ENCODE measurements at regions of chr5 and their contacts with region 1.

Region 1: DNA sequence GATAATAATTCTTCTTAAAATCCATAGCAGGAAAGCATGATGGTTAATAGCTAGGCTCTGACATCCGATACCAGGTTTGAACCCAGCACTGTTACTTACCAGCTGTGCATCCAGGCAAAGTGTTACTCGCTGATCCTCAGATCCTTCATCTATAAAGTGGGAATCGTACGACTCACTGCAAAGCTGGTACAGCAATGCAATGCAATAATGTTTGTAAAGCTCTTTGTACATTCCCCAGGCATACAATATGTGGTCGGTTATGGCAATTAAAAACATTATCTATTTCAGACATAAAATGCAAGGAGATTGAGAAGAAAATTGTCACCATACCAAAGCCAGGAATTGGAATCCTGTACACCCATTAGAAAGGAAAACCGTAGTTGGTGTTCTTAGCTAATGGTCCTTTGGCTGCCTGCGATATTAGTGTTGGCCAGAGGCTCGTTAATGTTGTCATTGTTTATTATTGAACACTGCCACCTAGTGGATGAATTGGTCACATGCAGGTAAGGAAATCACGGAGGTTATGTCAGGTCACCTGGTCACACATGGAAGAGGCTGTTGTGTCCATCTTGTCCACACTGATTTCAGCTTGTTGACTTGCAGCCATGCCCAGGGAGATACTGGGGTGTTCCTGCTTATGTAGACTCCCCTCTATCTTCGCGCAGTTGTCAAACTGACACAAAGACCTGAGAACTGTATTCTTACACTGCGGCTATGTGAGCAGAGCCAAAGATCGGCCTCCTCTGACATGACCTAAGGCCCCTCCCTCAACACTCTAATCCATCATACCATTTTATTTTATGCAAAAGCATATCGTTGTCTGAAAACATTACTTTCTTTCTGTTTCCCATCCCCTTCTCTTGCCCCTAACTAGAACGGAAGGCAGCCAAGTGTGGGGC is 87.5 kb upstream of the PPP2R2B start:
- DNase-seq: peak; percentile 58
- ATAC-seq: peak; percentile 81
- H3K4me3 Mint-ChIP-seq: no peak overlapping the region
- H3K27ac Mint-ChIP-seq: no peak overlapping the region
- H3K4me1 Mint-ChIP-seq: peaks cover 2% of the 10 kb centered on the region
- H3K27me3 Mint-ChIP-seq: no peaks in the 10 kb centered on the region

Region 2: GRCh38 chr5:146533260-146533857 is 432.7 kb before region 1 on chr5:
- CTCF ChIA-PET with region 1: interaction called, 75 read pairs
- POLR2A ChIA-PET with region 1: no interaction called
- intact Hi-C with region 1: loop called (anchors 1 kb)
- DNase-seq: peak; percentile 88
- ATAC-seq: peak; percentile 98
- H3K4me3 Mint-ChIP-seq: no peak overlapping the region
- H3K27ac Mint-ChIP-seq: no peak overlapping the region
- H3K4me1 Mint-ChIP-seq: peaks cover 3% of the 10 kb centered on the region
- H3K27me3 Mint-ChIP-seq: no peaks in the 10 kb centered on the region

Region 3: DNA sequence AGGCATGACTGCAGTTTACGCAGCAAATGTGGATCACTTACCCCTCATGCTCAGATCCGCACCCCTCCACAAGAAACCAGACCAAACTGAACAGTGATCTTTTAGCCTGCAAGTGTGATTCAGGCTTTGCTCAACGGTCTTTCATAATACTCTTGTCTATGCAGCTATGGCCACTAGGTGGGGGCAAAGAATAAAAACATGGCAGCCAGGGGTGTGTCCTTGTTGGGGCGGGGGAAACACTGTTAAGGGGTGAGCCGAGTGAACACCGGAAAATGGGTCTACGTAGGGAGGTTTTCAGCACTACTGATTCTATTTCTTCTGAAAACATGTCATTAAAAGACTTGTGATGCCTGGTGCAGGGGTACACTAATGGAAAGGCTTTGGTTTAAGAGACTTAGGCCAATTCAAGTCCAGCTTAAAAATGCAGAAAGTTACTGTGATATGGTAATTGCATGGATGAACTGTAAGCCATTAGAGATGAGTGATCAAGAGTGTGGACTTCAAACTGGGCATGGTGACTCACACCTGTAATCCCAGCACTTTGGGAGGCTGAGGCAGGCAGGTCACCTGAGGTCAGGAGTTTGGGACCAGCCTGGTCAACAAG is 400.1 kb before region 1 on chr5:
- CTCF ChIA-PET with region 1: interaction called, 10 read pairs
- POLR2A ChIA-PET with region 1: no interaction called
- intact Hi-C with region 1: loop called in 1 of 2 experiments (anchors 1 kb)
- DNase-seq: peak; percentile 72
- ATAC-seq: peak; percentile 97
- H3K4me3 Mint-ChIP-seq: no peak overlapping the region
- H3K27ac Mint-ChIP-seq: no peak overlapping the region
- H3K4me1 Mint-ChIP-seq: no peaks in the 10 kb centered on the region
- H3K27me3 Mint-ChIP-seq: no peaks in the 10 kb centered on the region

Region 4: DNA sequence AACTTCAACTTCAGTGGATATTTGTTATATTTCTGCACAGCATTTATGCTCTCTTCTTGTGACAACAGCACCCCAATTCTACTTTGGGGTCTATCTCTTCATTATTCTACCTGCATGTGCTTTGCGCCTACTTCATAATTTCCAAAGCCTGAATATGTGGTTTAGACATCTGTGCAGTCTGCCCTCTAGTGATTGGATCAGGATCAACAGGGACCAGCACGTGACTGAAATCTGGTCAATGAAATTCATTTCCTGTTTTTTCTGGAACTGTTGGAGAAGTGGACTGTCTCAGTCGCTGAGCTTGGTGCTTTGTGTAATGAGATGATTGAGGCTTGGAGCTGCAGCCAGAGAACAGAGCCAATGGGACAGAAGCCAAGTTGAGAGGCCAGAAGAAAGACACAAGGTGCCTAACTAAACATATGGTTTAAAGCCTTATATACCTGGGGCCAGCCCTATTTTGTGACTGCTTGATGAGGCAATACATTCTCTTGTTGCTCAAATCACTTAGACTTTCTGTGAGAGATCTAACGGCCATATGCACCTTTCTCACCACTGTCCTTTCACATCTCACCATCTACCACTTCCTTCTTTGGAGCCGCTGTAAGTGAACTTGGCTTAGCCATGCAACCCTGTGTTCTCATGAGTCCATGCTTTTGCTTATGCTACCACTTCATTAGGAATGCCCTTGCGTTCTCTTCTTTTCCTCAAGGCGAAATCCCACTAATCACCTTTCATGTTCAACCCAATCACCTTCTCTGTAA is 18.6 kb before region 1 on chr5:
- CTCF ChIA-PET with region 1: interaction called, 13 read pairs
- POLR2A ChIA-PET with region 1: no interaction called
- intact Hi-C with region 1: no loop called
- DNase-seq: peak; percentile 24
- ATAC-seq: peak; percentile 36
- H3K4me3 Mint-ChIP-seq: no peak overlapping the region
- H3K27ac Mint-ChIP-seq: no peak overlapping the region
- H3K4me1 Mint-ChIP-seq: peaks cover 3% of the 10 kb centered on the region
- H3K27me3 Mint-ChIP-seq: peaks cover 2% of the 10 kb centered on the region

Region 5: GRCh38 chr5:147188200-147189108 is 222.4 kb after region 1 on chr5:
- CTCF ChIA-PET with region 1: interaction called, 4 read pairs
- POLR2A ChIA-PET with region 1: no interaction called
- intact Hi-C with region 1: loop called in 1 of 2 experiments (anchors 1 kb)
- DNase-seq: peak; percentile 56
- ATAC-seq: peak; percentile 73
- H3K4me3 Mint-ChIP-seq: no peak overlapping the region
- H3K27ac Mint-ChIP-seq: no peak overlapping the region
- H3K4me1 Mint-ChIP-seq: peaks cover 2% of the 10 kb centered on the region
- H3K27me3 Mint-ChIP-seq: peaks cover 8% of the 10 kb centered on the region

Measured in activated CD4-positive, alpha-beta T cell treated with anti-CD3 and anti-CD28 coated beads for 36 hours (primary cell).